Activated CD4-positive, alpha-beta memory T cell treated with anti-CD3 and anti-CD28 coated beads for 36 hours (primary cell): ENCODE measurements at regions of chr18 and their contacts with region 1.

Region 1: GRCh38 chr18:76265497-76266235 is 229.4 kb downstream of the ZNF516 start:
- DNase-seq: no peak
- H3K4me3 Mint-ChIP-seq: no peak overlapping the region
- H3K27ac Mint-ChIP-seq: no peak overlapping the region
- H3K4me1 Mint-ChIP-seq: no peaks in the 10 kb centered on the region
- H3K27me3 Mint-ChIP-seq: peaks cover 6% of the 10 kb centered on the region

Region 2: DNA sequence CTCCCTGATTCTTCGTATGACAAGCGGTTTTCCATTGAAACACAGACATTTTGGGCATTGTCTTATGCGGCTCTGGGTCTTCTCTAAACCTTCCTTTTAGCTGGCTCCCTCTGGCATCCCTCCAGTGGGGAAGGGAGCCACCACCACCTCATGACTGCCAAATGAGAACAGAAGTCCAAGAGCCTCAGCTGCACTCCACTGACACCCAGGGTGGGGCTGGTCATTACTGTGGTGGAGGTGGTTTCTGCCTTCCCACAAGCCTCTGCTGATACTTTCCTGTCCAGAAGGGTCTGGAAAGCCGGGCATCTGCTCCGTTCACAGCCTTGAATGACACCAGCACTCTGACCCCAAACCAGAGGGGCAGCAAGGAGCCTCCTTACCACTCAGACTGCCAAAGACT is 15.9 kb after region 1 on chr18:
- CTCF ChIA-PET with region 1: no interaction called
- POLR2A ChIA-PET with region 1: no interaction called
- intact Hi-C with region 1: loop called (anchors 1 kb)
- DNase-seq: no peak
- H3K4me3 Mint-ChIP-seq: no peak overlapping the region
- H3K27ac Mint-ChIP-seq: no peak overlapping the region
- H3K4me1 Mint-ChIP-seq: no peaks in the 10 kb centered on the region
- H3K27me3 Mint-ChIP-seq: peaks cover 15% of the 10 kb centered on the region

Region 3: GRCh38 chr18:76914314-76914713 is 648.6 kb after region 1 on chr18:
- CTCF ChIA-PET with region 1: no interaction called
- POLR2A ChIA-PET with region 1: no interaction called
- intact Hi-C with region 1: no loop called
- DNase-seq: no peak
- H3K4me3 Mint-ChIP-seq: no peak overlapping the region
- H3K27ac Mint-ChIP-seq: no peak overlapping the region
- H3K4me1 Mint-ChIP-seq: no peaks in the 10 kb centered on the region
- H3K27me3 Mint-ChIP-seq: no peaks in the 10 kb centered on the region